ENCODE measurements at regions of chr7 and their contacts with region 1.

Region 1: DNA sequence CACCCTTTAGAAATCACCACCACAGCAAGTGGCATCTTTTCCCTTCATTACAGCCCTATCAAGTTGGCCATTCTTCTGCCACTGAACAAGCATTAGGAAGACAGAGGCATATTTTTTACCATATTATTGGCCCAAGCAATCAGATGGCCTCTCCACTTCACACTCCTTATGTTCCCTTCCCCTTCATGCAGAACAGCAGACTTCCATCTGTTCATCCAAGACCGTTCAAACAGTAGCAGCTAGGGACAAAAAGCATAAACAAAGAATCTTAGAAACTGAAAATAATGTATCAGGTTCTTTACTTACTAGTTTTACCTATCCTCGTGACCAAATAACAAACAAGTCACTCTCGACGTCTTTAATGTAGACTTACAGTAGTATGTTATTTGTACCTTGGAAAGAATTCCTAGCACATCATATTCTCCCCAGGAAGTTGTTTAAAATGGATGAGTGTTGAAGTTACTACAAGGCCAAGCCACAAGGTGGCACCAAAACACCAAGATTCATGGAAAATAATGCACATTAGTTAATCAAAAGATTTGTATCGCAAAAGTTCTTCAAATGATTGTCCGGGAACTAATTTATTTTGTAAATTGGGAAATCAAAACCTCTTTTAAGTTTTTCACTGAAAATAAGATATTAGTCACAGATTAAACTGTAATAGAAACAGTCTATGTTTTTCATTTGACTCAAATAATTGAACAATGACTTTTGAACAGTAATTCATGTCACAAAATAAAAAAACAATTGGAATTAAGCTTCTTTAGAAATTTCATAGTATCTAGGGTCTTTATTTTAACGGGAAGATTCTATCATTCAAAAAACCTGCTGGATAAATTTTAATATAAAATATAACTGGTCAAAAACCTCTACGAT is 112.1 kb downstream of the VPS41 start:
- DNase-seq: peak in 1 of 2 donors; percentile 14
- ATAC-seq: peak in 1 of 2 donors; percentile 46
- H3K4me3 ChIP-seq: no peak overlapping the region
- H3K27ac ChIP-seq: no peak overlapping the region
- H3K4me1 ChIP-seq: no peaks in the 10 kb centered on the region
- H3K27me3 ChIP-seq: no peaks in the 10 kb centered on the region
- CTCF ChIP-seq: peak; percentile 55 to 68 (median 63)
- POLR2A ChIP-seq: no peak

Region 2: GRCh38 chr7:39321909-39322498 is 525.1 kb after region 1 on chr7:
- in situ Hi-C with region 1: no loop called
- intact Hi-C with region 1: no loop called
- DNase-seq: no peak
- ATAC-seq: no peak
- H3K4me3 ChIP-seq: no peak overlapping the region
- H3K27ac ChIP-seq: no peak overlapping the region
- H3K4me1 ChIP-seq: no peaks in the 10 kb centered on the region
- H3K27me3 ChIP-seq: no peaks in the 10 kb centered on the region
- CTCF ChIP-seq: no peak
- POLR2A ChIP-seq: no peak

Region 3: GRCh38 chr7:39465055-39465929 is 668.4 kb after region 1 on chr7:
- in situ Hi-C with region 1: loop called in 1 of 4 experiments (anchors 25 kb)
- intact Hi-C with region 1: loop called (anchors 2 kb)
- DNase-seq: no peak
- ATAC-seq: peak; percentile 73 to 91
- H3K4me3 ChIP-seq: peak overlapping the region in 2 of 4 donors; percentile 11 to 18
- H3K27ac ChIP-seq: no peak overlapping the region
- H3K4me1 ChIP-seq: no peaks in the 10 kb centered on the region
- H3K27me3 ChIP-seq: no peaks in the 10 kb centered on the region
- CTCF ChIP-seq: peak; percentile 40 to 70 (median 58)
- POLR2A ChIP-seq: no peak

Region 4: DNA sequence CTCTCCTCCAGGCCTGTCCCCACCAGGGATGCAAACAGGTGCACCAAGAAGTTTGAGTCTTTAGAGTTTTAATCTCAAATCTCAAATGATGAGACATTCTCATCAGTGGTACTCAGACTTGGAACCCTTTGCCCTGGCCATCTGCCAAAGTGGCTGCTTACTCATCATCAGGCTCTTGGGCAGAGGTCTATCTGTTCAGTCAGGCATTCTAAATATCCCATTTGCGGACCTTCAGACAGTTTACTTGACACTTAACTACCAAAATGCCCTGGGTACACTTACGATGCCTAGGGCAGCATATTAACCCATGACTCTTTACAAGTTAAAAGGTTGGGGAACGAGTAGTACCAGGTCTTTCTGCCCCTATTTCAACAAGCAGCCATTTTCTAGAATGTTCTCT is 708.1 kb after region 1 on chr7:
- in situ Hi-C with region 1: loop called in 2 of 4 experiments (anchors 10 to 25 kb)
- intact Hi-C with region 1: no loop called
- DNase-seq: no peak
- ATAC-seq: no peak
- H3K4me3 ChIP-seq: no peak overlapping the region
- H3K27ac ChIP-seq: no peak overlapping the region
- H3K4me1 ChIP-seq: no peaks in the 10 kb centered on the region
- H3K27me3 ChIP-seq: no peaks in the 10 kb centered on the region
- CTCF ChIP-seq: no peak
- POLR2A ChIP-seq: no peak

Region 5: DNA sequence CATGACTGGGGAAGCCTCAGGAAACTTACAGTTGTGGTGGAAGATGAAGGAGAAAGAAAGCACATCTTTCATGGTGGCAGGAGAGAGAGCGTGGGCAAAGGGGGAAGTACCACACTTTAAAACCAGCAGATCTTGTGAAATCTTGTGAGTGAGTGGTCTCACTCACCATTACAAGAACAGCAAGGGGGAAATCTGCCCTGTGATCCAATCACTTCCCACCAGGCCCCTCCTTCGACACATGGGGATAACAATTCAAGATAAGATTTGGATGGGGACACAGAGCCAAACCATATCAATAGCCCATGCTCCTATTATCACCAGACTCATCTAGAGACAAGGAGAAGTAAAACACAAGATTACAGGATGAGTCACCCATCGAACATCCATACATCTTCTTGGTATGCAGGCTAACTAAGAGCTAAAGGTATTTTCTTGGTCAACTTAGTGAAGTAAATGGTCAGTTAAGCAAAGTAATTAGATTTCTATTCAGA is 714.0 kb after region 1 on chr7:
- in situ Hi-C with region 1: loop called in 3 of 4 experiments (anchors 5 to 25 kb)
- intact Hi-C with region 1: no loop called
- DNase-seq: no peak
- ATAC-seq: no peak
- H3K4me3 ChIP-seq: no peak overlapping the region
- H3K27ac ChIP-seq: no peak overlapping the region
- H3K4me1 ChIP-seq: no peaks in the 10 kb centered on the region
- H3K27me3 ChIP-seq: no peaks in the 10 kb centered on the region
- CTCF ChIP-seq: no peak
- POLR2A ChIP-seq: no peak

Region 6: GRCh38 chr7:39517240-39517639 is 720.4 kb after region 1 on chr7:
- in situ Hi-C with region 1: loop called in 3 of 4 experiments (anchors 5 to 25 kb)
- intact Hi-C with region 1: loop called (anchors 2 kb)
- DNase-seq: no peak
- ATAC-seq: no peak
- H3K4me3 ChIP-seq: no peak overlapping the region
- H3K27ac ChIP-seq: no peak overlapping the region
- H3K4me1 ChIP-seq: no peaks in the 10 kb centered on the region
- H3K27me3 ChIP-seq: peaks cover 0 to 3% (median 0%) of the 10 kb centered on the region in 3 donors
- CTCF ChIP-seq: no peak
- POLR2A ChIP-seq: no peak